WTC11 (cell line): ENCODE measurements at regions of chr7 and their contacts with region 1.

Region 1: DNA sequence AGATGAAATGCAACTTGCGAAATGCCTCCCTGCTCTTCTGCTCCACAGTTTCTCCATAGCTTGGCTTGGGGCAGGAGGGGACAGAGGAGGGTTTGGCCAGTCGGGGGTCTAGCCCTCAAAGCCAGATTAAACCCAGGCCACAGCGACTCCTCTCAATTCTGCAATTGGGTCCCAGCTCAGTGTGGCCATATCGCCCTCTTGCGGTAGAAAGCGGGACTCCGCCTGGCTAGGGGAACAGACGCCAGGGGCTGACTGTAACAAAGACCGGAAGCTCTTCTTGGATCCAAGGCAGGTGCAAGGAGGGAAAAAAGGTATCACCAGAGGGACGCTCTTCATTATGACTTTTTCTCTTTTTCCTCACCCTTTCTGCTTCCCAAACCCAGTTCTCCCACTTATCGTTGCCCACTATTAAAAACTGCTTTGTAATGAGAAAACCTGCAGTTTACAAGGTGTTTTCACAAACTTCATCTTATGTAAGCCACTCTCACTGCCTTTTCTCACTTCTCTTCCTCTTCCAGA is 36.6 kb upstream of the TNPO3 start:
- DNase-seq: peak; percentile 98
- ATAC-seq: peak; percentile 98
- H3K4me3 Mint-ChIP-seq: no peak overlapping the region
- H3K27ac Mint-ChIP-seq: no peak overlapping the region
- H3K4me1 Mint-ChIP-seq: peaks cover 8% of the 10 kb centered on the region
- H3K27me3 Mint-ChIP-seq: no peaks in the 10 kb centered on the region
- CTCF ChIP-seq: peak; percentile 93

Region 2: DNA sequence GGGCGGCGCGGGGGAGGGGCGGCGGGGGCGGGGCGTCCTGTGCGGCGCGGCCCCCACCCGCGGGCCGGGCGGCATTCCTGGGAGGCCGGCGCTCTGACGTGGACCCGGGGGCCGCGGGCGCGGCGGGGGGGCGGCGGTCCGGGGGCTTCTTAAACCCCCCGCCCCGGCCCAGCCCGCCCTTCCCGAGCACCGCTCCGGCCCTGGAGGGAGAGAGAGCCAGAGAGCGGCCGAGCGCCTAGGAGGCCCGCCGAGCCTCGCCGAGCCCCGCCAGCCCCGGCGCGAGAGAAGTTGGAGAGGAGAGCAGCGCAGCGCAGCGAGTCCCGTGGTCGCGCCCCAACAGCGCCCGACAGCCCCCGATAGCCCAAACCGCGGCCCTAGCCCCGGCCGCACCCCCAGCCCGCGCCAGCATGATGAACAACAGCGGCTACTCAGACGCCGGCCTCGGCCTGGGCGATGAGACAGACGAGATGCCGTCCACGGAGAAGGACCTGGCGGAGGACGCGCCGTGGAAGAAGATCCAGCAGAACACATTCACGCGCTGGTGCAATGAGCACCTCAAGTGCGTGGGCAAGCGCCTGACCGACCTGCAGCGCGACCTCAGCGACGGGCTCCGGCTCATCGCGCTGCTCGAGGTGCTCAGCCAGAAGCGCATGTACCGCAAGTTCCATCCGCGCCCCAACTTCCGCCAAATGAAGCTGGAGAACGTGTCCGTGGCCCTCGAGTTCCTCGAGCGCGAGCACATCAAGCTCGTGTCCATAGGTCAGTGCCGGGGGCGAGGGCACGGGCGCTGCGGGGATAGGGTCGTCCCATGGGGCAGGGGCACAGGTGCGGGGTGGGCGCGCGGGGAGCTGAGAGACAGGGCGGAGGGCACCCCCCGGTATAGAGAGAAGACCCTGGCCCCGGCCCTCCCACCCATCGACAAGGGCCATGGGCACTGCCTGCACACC is 261.0 kb before region 1 on chr7 and contains the start of gene FLNC:
- CTCF ChIA-PET with region 1: interaction called, 12 read pairs
- POLR2A ChIA-PET with region 1: no interaction called
- DNase-seq: peak; percentile 45
- ATAC-seq: peak; percentile 2; the same call in 1 of the 2 replicates
- H3K4me3 Mint-ChIP-seq: peak within 1 kb of the TSS; percentile 77
- H3K27ac Mint-ChIP-seq: no peak within 1 kb of the TSS
- H3K4me1 Mint-ChIP-seq: peaks cover 39% of the 10 kb centered on the region
- H3K27me3 Mint-ChIP-seq: peaks cover 32% of the 10 kb centered on the region
- CTCF ChIP-seq: no peak
- total RNA-seq, gene FLNC: 6.3 to 8.0 TPM (median 6.8 TPM) in 3 replicates

Region 3: GRCh38 chr7:128940494-128941322 is 150.8 kb before region 1 on chr7:
- CTCF ChIA-PET with region 1: interaction called, 13 read pairs
- POLR2A ChIA-PET with region 1: no interaction called
- DNase-seq: peak; percentile 42
- ATAC-seq: peak; percentile 12
- H3K4me3 Mint-ChIP-seq: no peak overlapping the region
- H3K27ac Mint-ChIP-seq: no peak overlapping the region
- H3K4me1 Mint-ChIP-seq: peaks cover 11% of the 10 kb centered on the region
- H3K27me3 Mint-ChIP-seq: peaks cover 52% of the 10 kb centered on the region
- CTCF ChIP-seq: no peak

Region 4: DNA sequence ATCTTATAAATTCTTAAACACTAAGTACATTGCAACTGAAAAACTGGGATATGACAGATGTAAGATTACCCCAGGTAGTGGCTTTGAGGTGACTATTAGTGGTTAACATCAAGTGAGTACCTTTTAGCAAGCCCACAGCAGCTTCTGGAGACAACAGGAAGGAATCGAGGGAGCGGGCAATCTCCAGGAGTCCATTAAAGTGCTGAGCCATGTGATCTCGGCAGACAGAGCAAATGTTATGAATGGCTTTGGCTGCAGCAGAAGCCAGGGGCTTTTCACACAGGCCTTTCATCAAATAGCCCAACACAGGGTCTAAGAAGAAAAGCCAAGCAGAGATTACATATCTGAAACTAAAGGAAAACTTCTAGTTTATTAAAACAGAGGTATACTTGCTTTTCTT is 104.9 kb before region 1 on chr7:
- CTCF ChIA-PET with region 1: interaction called, 11 read pairs
- POLR2A ChIA-PET with region 1: no interaction called
- DNase-seq: no peak
- ATAC-seq: no peak
- H3K4me3 Mint-ChIP-seq: no peak overlapping the region
- H3K27ac Mint-ChIP-seq: no peak overlapping the region
- H3K4me1 Mint-ChIP-seq: peaks cover 16% of the 10 kb centered on the region
- H3K27me3 Mint-ChIP-seq: no peaks in the 10 kb centered on the region
- CTCF ChIP-seq: no peak

Region 5: DNA sequence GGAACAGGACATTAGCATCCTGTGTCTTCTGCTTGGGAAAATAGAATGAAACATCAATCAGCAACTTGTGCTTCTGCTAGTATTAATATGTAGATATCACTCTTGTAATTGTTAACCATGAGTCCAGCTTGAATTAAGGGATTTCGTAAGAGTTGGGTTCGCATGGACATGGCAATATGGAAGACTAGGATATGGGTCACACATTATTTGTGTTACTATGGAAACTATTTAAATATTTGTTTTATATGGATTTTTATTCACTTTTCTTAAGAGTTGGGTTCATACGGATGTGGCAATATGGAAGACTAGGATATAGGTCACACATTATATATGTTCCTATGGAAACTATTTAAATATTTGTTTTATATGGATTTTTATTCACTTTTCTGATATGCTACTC is 61.1 kb before region 1 on chr7:
- CTCF ChIA-PET with region 1: interaction called, 15 read pairs
- POLR2A ChIA-PET with region 1: no interaction called
- DNase-seq: no peak
- ATAC-seq: no peak
- H3K4me3 Mint-ChIP-seq: no peak overlapping the region
- H3K27ac Mint-ChIP-seq: no peak overlapping the region
- H3K4me1 Mint-ChIP-seq: 0 out of 2 replicates have a peak, but pooled peaks cover 5% of the 10 kb centered on the region
- H3K27me3 Mint-ChIP-seq: no peaks in the 10 kb centered on the region
- CTCF ChIP-seq: no peak

Region 6: GRCh38 chr7:129101746-129102145 is 10.2 kb after region 1 on chr7:
- CTCF ChIA-PET with region 1: interaction called, 33 read pairs
- POLR2A ChIA-PET with region 1: no interaction called
- DNase-seq: no peak
- ATAC-seq: no peak
- H3K4me3 Mint-ChIP-seq: no peak overlapping the region
- H3K27ac Mint-ChIP-seq: no peak overlapping the region
- H3K4me1 Mint-ChIP-seq: peaks cover 7% of the 10 kb centered on the region
- H3K27me3 Mint-ChIP-seq: no peaks in the 10 kb centered on the region
- CTCF ChIP-seq: no peak

Region 7: DNA sequence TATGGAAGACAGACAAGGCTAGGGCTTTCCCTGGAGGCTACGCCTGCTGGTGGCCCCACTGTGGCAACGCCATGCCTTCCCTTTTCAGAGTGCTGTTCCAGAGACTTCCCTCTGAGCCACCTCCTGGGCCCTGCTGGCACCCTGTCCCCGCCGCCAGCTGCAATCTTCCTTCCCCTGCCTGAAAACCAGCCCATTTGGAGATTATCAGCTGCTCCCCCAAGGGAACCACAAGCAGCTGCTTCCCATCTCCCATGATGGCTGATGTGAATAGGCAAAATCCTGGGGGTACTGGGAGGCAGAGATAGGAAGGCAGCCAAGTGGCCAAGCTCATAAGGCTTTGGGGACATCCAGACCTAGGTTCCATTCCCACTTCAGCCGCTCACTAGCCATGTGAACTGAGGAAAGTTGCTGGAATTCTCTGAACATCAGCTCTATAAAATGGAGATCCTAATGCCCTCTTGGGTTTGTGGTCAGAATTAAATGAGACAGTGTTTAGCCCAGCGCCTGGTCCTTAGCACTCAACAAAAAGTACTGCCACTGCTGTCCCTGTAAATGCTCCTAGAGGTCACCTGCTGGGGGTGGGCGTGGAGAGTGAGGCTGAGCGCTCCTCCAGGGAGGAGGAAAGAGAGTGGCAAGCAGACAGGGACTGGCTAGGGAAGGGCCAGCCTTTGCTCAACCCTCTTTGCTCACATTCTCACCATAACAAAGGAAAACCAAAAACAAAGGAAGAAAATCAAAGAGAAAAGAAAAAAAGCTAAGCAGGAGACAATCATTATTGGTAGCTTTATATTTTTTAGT is 58.9 kb after region 1 on chr7:
- CTCF ChIA-PET with region 1: interaction called, 10 read pairs
- POLR2A ChIA-PET with region 1: no interaction called
- DNase-seq: peak; percentile 54
- ATAC-seq: peak; percentile 95
- H3K4me3 Mint-ChIP-seq: no peak overlapping the region
- H3K27ac Mint-ChIP-seq: peak overlapping the region; percentile 26; the same call in 1 of the 2 replicates
- H3K4me1 Mint-ChIP-seq: peaks cover 21% of the 10 kb centered on the region
- H3K27me3 Mint-ChIP-seq: peaks cover 8% of the 10 kb centered on the region
- CTCF ChIP-seq: no peak

Region 8: GRCh38 chr7:129443612-129444011 is 352.1 kb after region 1 on chr7:
- CTCF ChIA-PET with region 1: no interaction called
- POLR2A ChIA-PET with region 1: no interaction called
- DNase-seq: no peak
- ATAC-seq: no peak
- H3K4me3 Mint-ChIP-seq: no peak overlapping the region
- H3K27ac Mint-ChIP-seq: no peak overlapping the region
- H3K4me1 Mint-ChIP-seq: no peaks in the 10 kb centered on the region
- H3K27me3 Mint-ChIP-seq: no peaks in the 10 kb centered on the region
- CTCF ChIP-seq: no peak